ENCODE measurements at regions of chr10 and their contacts with region 1.

Region 1: GRCh38 chr10:69092959-69093850 is 5.3 kb downstream of the SRGN start:
- DNase-seq: peak; percentile 86
- H3K4me3 Mint-ChIP-seq: peak overlapping the region; percentile 59
- H3K27ac Mint-ChIP-seq: peak overlapping the region; percentile 84
- H3K4me1 Mint-ChIP-seq: peaks cover 54% of the 10 kb centered on the region
- H3K27me3 Mint-ChIP-seq: no peaks in the 10 kb centered on the region

Region 2: DNA sequence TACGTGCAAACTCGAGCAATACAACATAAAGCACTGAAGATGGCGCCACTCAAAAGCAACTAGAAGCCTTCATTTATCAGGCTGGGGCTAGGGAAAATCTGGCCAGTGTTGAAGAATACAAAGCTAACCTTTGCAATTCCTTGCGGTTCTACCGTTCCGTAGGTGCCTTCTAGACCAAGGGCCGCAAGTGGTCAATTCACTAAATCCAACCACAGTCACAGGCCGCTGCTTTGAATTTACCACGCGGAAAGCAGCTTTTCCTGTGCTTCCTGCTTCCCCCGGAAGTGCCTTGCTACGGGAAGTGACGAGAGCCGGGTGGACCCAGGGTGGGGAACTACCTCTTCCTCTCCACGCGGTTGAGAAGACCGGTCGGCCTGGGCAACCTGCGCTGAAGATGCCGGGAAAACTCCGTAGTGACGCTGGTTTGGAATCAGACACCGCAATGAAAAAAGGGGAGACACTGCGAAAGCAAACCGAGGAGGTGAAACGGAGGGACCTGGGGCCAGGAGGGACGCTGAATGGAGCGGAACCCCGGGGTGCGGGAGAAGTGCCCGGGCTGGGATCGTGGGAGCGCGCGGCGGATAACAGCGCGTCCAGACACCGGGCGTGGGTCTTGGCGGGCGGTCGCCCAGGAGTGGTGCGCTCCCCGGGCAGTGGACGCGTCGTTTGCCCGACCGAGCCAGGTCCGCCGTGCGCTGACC is 137.2 kb before region 1 on chr10 and contains the start of gene DDX21:
- CTCF ChIA-PET with region 1: interaction called, 15 read pairs
- POLR2A ChIA-PET with region 1: interaction called, 12 read pairs
- intact Hi-C with region 1: loop called (anchors 1 kb)
- DNase-seq: peak; percentile 94
- H3K4me3 Mint-ChIP-seq: peak within 1 kb of the TSS; percentile 97
- H3K27ac Mint-ChIP-seq: peak within 1 kb of the TSS; percentile 99
- H3K4me1 Mint-ChIP-seq: peaks cover 39% of the 10 kb centered on the region
- H3K27me3 Mint-ChIP-seq: no peaks in the 10 kb centered on the region
- total RNA-seq, gene DDX21: 156 to 158 TPM

Region 3: DNA sequence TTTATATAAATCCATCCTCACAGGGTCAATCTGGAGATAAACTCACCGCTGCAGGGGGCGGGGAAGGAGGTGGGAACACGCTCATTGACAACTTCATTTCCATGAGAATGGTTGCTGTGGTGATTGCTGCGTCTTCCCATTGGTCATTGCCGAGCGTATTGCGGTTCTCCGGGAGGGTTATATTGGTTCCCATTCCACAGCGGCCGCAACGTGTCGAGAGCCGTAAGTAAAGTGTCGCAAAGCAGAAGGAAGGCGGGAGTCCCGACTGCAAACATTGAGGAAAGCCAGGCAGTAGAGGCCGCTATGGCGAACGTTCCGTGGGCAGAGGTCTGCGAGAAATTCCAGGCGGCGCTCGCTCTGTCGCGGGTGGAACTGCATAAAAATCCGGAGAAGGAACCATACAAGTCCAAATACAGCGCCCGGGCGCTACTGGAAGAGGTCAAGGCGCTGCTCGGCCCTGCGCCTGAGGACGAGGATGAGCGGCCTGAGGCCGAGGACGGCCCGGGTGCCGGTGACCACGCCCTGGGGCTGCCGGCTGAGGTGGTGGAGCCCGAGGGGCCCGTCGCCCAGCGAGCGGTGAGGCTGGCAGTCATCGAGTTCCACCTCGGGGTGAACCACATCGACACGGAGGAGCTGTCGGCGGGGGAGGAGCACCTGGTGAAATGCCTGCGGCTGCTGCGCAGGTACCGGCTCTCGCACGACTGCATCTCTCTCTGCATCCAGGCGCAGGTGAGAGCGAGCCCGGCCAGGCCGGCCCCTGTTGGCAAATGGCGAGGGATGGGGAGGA is 104.5 kb before region 1 on chr10 and contains the start of gene KIFBP:
- CTCF ChIA-PET with region 1: interaction called, 26 read pairs
- POLR2A ChIA-PET with region 1: interaction called, 5 read pairs
- intact Hi-C with region 1: loop called (anchors 1 kb)
- DNase-seq: peak; percentile 93
- H3K4me3 Mint-ChIP-seq: peak within 1 kb of the TSS; percentile 92
- H3K27ac Mint-ChIP-seq: peak within 1 kb of the TSS; percentile 83
- H3K4me1 Mint-ChIP-seq: peaks cover 49% of the 10 kb centered on the region
- H3K27me3 Mint-ChIP-seq: no peaks in the 10 kb centered on the region
- total RNA-seq, gene KIFBP: 23.0 to 25.2 TPM

Region 4: DNA sequence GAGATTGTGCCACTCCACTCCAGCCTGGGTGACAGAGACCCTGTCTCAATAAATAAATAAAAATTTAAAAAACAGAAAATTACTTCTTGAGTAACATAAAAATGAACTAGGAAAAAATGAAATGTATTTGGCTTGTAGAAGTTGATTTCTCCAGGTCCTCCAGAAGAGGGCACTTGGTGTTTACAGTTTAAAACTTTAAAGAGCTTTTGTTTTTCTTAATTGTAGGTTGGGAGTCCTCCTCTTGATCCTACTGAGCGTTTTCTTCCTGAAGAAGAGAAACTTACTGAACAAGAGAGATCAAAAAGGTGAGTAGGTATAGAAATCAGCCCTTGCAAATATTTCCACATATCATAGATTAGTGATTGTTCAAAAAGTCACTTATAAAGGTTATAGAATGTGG is 88.4 kb before region 1 on chr10:
- CTCF ChIA-PET with region 1: interaction called, 159 read pairs
- POLR2A ChIA-PET with region 1: interaction called, 7 read pairs
- intact Hi-C with region 1: loop called (anchors 1 kb)
- DNase-seq: no peak
- H3K4me3 Mint-ChIP-seq: no peak overlapping the region
- H3K27ac Mint-ChIP-seq: no peak overlapping the region
- H3K4me1 Mint-ChIP-seq: peaks cover 15% of the 10 kb centered on the region
- H3K27me3 Mint-ChIP-seq: no peaks in the 10 kb centered on the region

Region 5: GRCh38 chr10:69061305-69062161 is 31.7 kb before region 1 on chr10:
- CTCF ChIA-PET with region 1: interaction called, 13 read pairs
- POLR2A ChIA-PET with region 1: interaction called, 92 read pairs
- intact Hi-C with region 1: no loop called
- DNase-seq: peak; percentile 49
- H3K4me3 Mint-ChIP-seq: peak overlapping the region; percentile 61
- H3K27ac Mint-ChIP-seq: peak overlapping the region; percentile 70
- H3K4me1 Mint-ChIP-seq: peaks cover 62% of the 10 kb centered on the region
- H3K27me3 Mint-ChIP-seq: no peaks in the 10 kb centered on the region

Measured in activated CD4-positive, alpha-beta memory T cell treated with anti-CD3 and anti-CD28 coated beads for 36 hours (primary cell).